Thyroid gland (tissue), 4 donors: ENCODE measurements at regions of chr15 and their contacts with region 1.

Region 1: GRCh38 chr15:78108299-78109084 is 16.1 kb downstream of the SH2D7 start:
- DNase-seq: peak; percentile 84 to 90
- H3K4me3 ChIP-seq: no peak overlapping the region
- H3K27ac ChIP-seq: no peak overlapping the region
- H3K4me1 ChIP-seq: no peaks in the 10 kb centered on the region
- H3K27me3 ChIP-seq: no peaks in the 10 kb centered on the region
- CTCF ChIP-seq: peak; percentile 85 to 97 (median 95)
- POLR2A ChIP-seq: no peak

Region 2: DNA sequence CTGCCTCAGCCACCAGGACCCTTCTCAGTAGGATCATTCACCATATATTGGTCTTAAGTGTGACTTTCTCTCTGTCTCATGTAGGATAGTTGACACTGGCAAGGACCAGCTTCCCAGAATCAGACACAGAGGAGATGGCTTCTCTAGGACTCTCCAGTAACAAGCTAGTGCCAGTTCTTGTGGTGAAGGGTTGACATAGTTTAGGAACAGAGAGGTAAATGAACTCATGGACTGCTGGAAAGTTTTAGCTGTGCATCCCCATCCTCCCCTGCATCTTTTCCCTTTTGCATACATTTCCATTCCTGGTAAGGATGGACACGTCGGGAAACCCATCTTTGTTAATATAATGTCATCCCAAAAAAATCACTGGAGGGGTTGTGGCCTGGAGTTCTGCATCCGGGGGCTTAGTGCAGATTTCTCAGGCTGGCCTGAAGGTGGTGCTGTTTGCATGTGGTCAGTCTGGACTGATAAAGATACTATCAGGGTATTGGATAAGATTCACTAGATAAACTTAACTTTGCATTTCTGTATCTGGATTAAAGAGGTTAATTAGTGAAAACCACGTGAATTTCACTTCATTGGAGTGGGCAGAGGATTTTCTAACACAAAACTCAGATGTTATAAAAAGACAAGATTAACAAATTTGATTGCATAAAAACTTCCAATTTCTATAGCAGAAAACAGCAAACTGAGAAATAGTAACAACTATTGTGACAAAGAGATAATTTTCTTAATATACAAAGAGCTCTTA is 141.8 kb before region 1 on chr15:
- intact Hi-C with region 1: loop called (anchors 2 kb)
- DNase-seq: peak; percentile 32 to 53
- H3K4me3 ChIP-seq: no peak overlapping the region
- H3K27ac ChIP-seq: no peak overlapping the region
- H3K4me1 ChIP-seq: no peaks in the 10 kb centered on the region
- H3K27me3 ChIP-seq: no peaks in the 10 kb centered on the region
- CTCF ChIP-seq: peak; percentile 49 to 86 (median 83)
- POLR2A ChIP-seq: no peak